ENCODE measurements at regions of chr3 and their contacts with region 1.

Region 1: GRCh38 chr3:69161587-69162307 is 39.4 kb upstream of the LMOD3 start:
- DNase-seq: peak in 3 of 10 donors; percentile 5 to 38 (median 16)
- H3K4me3 ChIP-seq: no peak overlapping the region
- H3K27ac ChIP-seq: peak overlapping the region in 21 of 59 donors; percentile 1 to 78 (median 49)
- H3K27me3 ChIP-seq: no peaks in the 10 kb centered on the region
- CTCF ChIP-seq: peak; percentile 83 to 99 (median 95)

Region 2: DNA sequence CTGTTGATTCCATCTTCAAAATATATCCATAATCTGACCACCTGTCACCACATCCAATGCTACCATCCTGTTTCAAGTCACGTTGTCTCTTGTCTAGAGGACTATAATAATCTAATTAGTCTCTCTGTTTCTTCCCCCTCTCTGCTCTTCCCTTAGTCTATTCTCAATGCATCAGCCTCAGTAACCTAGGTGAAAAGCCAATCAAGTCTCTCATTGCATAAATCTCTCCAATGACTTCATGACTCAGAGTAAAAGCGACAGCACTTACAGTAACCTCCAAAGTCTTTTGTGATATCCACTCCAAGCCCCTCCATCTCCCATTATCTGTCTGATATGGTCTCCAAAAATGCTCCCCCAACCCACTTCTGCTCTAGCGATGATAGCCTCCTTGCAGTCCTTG is 88.8 kb before region 1 on chr3:
- intact Hi-C with region 1: no loop called
- DNase-seq: no peak
- H3K4me3 ChIP-seq: no peak overlapping the region
- H3K27ac ChIP-seq: no peak overlapping the region
- H3K27me3 ChIP-seq: no peaks in the 10 kb centered on the region
- CTCF ChIP-seq: no peak

Region 3: DNA sequence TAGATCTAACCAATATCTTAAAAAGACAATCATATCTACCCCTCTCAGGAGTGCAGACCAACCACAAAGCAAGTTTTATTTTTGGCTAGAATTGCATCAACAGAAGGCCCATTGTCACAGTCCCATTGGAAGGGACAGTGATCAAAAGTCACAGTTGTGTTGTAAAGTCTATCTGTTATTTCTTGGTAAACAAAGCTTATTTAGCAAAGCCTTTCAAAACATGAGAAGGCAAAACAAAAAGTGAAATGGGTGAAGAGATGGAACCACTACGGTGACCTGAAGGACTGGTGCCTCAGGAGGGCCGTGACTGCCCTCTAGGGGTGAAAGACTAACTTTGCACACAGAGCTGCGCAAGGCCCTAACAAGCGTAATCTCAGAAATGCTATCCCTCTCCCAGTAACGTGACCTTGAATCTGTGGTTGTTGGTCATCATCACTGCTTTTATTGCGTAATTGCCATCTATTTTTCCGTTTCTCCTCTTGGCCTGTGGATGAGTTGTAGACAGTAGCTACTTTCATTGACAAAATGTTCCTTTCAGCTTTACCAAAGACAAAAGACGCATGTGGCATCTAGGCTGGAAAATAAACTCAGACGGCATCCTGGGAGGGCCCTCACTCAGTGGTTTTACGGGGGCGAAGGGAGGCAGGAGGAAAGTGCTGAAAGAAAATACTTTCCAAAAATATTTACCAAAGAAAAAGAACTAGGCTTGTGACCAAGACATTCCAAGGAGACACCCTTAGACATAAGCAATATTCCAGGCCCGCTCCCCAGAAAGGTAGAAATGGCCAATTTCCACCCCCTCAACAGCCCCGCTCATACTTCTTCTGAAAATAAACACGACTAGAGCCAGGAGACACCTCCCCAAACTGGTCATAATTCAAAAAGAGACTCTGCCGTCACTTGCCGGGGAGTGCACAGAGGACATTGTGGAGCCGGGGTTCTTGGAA is 144.8 kb after region 1 on chr3:
- intact Hi-C with region 1: loop called (anchors 2 kb)
- DNase-seq: peak in 9 of 10 donors; percentile 28 to 76 (median 64)
- H3K4me3 ChIP-seq: peak overlapping the region in 10 of 59 donors; percentile 0 to 36 (median 4)
- H3K27ac ChIP-seq: peak overlapping the region; percentile 40 to 97 (median 90)
- H3K27me3 ChIP-seq: peaks cover 0 to 4% (median 0%) of the 10 kb centered on the region in 45 donors
- CTCF ChIP-seq: peak; percentile 84 to 99 (median 95)

Region 4: GRCh38 chr3:69410250-69410649 is 248.5 kb after region 1 on chr3:
- intact Hi-C with region 1: loop called in 1 of 2 experiments (anchors 5 kb)
- DNase-seq: peak; percentile 14 to 85 (median 70)
- H3K4me3 ChIP-seq: peak overlapping the region in 7 of 59 donors; percentile 9 to 32 (median 26)
- H3K27ac ChIP-seq: peak overlapping the region in 41 of 59 donors; percentile 0 to 81 (median 63)
- H3K27me3 ChIP-seq: peaks cover 0 to 3% (median 0%) of the 10 kb centered on the region in 45 donors
- CTCF ChIP-seq: peak; percentile 75 to 93 (median 85)

Region 5: GRCh38 chr3:69425261-69425660 is 263.5 kb after region 1 on chr3:
- intact Hi-C with region 1: loop called in 1 of 2 experiments (anchors 5 kb)
- DNase-seq: peak in 1 of 10 donors; percentile 26
- H3K4me3 ChIP-seq: no peak overlapping the region
- H3K27ac ChIP-seq: peak overlapping the region in 8 of 59 donors; percentile 12 to 53 (median 32)
- H3K27me3 ChIP-seq: peaks cover 0 to 2% (median 0%) of the 10 kb centered on the region in 45 donors
- CTCF ChIP-seq: peak in 55 of 56 donors; percentile 27 to 73 (median 54)

Region 6: DNA sequence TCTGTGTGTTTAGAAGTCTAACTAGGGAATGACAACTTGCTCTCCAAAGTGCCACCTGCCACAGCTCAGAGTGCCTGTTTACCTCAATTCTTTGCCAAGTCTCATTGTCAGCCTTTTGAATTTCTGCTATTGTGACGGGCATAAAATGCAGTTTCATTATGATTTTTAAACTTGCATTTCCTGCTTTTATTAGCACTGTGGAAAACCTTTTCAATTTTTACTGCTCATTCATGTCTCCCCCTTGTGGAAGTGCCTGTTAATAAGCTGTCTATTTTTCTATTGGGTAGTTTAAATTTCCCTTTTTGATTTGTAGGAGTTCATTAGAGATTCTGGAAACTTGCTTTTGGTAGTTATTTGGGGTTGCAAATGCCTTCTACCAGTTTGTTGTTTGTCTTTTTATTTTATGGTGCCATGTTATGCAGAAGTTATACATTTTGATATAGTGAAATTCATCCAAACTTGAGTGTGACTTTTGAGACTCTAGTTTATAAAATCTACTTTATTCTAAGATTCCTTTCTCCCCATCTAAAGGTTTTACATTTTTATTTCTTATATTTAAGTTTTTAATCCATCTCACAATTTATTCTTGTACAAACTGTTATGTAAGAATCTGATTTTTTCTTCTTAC is 278.0 kb after region 1 on chr3:
- intact Hi-C with region 1: loop called in 1 of 2 experiments (anchors 5 kb)
- DNase-seq: no peak
- H3K4me3 ChIP-seq: peak overlapping the region in 29 of 59 donors; percentile 8 to 47 (median 24)
- H3K27ac ChIP-seq: peak overlapping the region in 37 of 59 donors; percentile 0 to 78 (median 48)
- H3K27me3 ChIP-seq: no peaks in the 10 kb centered on the region
- CTCF ChIP-seq: peak; percentile 32 to 84 (median 70)

Region 7: DNA sequence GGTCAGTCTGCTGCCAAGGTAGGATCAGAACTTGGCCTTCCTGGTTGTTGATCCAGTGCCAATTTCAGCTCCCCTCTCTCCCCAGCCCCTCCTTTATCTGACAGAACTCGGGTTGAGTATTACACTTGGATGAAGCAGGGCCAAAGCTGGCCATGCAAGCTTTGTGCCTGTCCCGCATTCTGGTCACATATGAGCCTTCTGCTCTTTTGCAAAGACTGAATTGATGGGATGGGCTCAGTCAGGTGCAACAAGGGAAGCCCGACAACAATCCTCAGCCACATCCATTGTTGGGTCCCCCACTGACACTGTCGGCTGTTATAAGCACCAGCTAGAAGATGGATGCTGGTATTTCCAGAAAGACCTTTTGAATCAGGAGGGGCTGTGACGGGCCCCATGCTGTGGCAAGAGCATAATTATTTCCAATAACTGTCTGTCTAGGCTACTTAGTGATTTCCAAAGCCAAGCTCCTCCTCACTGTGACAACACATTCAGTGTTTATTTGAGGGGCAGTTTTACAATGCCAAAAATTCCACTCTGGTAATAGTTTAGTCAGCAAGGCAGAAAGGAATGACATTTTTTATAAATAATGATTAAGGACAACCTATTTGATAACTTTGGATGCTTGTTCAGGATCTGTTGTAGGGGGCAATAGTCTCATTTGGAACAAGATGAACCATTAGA is 370.9 kb after region 1 on chr3:
- intact Hi-C with region 1: loop called in 1 of 2 experiments (anchors 10 kb)
- DNase-seq: no peak
- H3K4me3 ChIP-seq: no peak overlapping the region
- H3K27ac ChIP-seq: peak overlapping the region in 18 of 59 donors; percentile 2 to 70 (median 42)
- H3K27me3 ChIP-seq: peaks cover 0 to 9% (median 0%) of the 10 kb centered on the region in 45 donors
- CTCF ChIP-seq: no peak

Region 8: DNA sequence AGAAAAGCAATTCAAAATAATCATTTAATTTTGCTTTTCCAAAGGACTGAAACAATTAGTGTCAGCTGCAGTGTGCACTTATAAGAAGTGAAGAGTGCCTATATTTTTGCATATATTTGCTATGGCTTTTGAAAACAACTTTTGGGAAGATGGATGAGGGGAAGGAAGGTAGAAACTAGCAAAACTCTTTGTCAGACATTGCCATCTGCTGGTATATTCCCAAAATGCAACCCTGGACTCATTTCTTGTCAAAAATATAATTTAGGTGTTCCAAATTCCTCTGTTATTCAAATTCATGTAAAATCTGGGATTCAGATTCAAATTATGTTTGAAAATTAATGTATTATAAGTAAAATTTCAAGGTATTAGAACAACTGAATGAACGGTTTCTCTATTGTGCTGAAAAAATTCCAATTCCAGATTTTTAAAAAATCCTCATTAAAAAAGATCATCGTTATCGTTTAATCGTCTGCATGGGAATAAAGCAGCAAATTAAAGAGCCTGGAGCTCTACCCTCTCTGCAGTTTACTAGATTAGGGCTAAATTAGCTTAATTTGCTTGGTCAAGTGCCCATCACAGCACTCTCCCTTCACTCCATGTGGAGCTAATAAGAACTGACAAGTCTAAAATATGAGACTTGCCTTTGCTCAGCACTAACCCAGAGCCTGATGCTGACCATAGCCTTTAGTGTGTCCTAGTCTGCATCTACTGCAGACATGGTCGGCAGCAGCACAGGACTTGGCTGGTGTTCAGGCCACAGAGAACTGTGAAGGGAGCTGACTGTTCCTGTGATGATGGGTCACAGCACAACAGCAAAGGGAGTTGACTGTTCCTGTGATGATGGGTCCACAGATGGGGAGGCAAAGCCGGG is 509.6 kb after region 1 on chr3:
- intact Hi-C with region 1: loop called (anchors 5 kb)
- DNase-seq: peak in 2 of 10 donors; percentile 29 to 54
- H3K4me3 ChIP-seq: peak overlapping the region in 1 of 59 donors; percentile 26
- H3K27ac ChIP-seq: peak overlapping the region in 26 of 59 donors; percentile 5 to 75 (median 37)
- H3K27me3 ChIP-seq: peaks cover 0 to 4% (median 0%) of the 10 kb centered on the region in 45 donors
- CTCF ChIP-seq: peak; percentile 65 to 97 (median 86)

Measured in dorsolateral prefrontal cortex (tissue), 120 donors.